OCI-LY7 (cell line): ENCODE measurements at regions of chr6 and their contacts with region 1.

Region 1: DNA sequence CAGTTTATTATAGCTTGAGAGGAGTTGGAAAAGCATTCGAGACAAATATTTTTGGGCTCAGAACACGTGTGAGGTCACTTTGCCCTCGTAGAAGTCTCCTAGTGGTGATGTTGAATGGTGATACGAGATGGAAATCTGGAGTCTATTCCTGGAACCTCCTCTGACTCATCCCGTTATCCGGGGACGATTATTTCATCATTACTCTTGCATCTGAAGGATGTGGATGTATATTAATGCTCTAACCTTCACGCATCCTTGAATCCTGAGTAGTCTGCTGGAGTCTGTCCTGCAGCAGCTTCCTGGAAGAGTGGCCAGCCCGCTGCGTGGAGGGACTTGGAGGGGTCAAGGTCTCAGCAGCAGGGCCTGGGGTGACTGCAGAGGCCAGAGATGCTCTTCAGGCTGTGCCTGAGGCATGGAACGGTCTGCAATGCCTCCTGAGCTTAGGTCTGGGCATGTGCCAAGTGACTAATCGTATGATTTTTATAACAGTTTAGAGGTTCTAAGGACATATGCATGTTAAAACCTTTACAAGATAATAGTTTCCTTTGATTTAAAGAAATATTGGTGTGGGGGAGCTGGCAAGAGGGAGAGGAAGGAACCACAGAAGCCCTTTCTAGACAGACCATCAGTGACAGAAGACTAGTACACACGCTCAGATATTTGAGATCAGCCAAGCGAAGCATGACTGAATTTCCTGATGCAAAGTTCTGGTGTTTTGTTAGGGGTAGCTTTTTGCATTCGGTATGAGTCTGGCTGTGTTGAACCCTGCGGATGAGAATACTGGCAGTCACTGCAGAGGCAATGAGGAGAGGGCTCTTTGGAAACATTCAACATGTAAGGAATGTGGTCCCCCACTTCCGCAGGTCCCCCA is 400.2 kb downstream of the QKI start:
- DNase-seq: peak; percentile 67
- H3K4me3 ChIP-seq: no peak overlapping the region
- H3K27ac ChIP-seq: no peak overlapping the region
- H3K4me1 ChIP-seq: peaks cover 19% of the 10 kb centered on the region
- CTCF ChIP-seq: no peak

Region 2: GRCh38 chr6:163701762-163702161 is 113.0 kb before region 1 on chr6:
- CTCF ChIA-PET with region 1: no interaction called
- POLR2A ChIA-PET with region 1: no interaction called
- intact Hi-C with region 1: no loop called
- DNase-seq: no peak
- H3K4me3 ChIP-seq: no peak overlapping the region
- H3K27ac ChIP-seq: no peak overlapping the region
- H3K4me1 ChIP-seq: peaks cover 48% of the 10 kb centered on the region
- CTCF ChIP-seq: no peak

Region 3: GRCh38 chr6:164911873-164912580 is 1097.3 kb after region 1 on chr6:
- CTCF ChIA-PET with region 1: no interaction called
- POLR2A ChIA-PET with region 1: interaction called, 14 read pairs
- intact Hi-C with region 1: no loop called
- DNase-seq: no peak
- H3K4me3 ChIP-seq: no peak overlapping the region
- H3K27ac ChIP-seq: no peak overlapping the region
- H3K4me1 ChIP-seq: no peaks in the 10 kb centered on the region
- CTCF ChIP-seq: no peak